ENCODE measurements at regions of chr13 and their contacts with region 1.

Region 1: DNA sequence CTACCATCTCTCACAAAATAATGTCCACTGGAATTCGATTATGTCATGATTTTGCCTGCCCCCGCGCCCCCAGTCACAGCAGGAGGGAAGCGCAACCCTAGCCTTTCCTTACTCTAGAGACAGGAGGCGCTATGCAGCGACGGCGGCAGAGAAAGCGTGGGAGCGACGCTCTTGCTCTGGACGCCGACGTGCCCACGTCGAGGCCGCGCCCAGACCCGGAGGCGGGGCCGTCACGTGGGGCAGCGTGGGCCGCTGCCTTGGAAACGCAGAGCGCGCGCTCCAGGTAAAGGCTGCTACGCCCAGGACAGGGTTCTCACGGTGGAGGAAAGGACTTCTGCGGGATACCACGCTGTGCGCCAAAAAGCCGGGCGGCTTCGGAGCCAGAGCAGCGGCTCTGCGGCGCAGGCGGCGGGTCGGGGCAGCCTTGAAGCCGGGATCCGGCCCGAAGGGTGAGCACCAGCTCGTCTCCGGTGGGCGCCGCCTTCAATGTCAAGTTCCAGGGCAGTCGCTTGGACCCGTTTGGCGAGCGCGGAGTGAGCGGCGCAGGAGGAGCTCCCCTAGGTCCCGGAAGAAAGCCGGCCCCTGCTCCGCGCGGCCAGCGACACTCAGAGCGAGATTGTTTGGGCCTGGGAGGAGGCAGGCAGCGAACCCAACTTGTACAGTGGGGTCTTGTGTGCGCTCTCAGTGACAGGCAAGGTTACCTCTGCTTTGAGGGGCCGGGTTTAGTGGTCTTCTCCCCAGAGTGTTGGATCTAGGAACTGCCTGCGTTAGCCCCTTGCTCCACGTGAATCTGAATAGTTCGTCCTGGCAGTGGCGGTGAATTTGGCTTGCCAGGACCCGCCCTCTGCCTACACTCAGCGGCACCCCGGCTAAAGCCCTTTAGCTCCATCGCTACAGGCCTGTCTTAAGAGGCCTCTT is 121.7 kb downstream of the MRPL57 start:
- DNase-seq: peak; percentile 86 to 87
- H3K4me3 ChIP-seq: peak overlapping the region; percentile 28 to 91 (median 86)
- H3K27ac ChIP-seq: peak overlapping the region; percentile 58 to 68 (median 62)
- H3K4me1 ChIP-seq: peaks cover 15 to 22% of the 10 kb centered on the region in 2 donors
- H3K27me3 ChIP-seq: no peaks in the 10 kb centered on the region
- CTCF ChIP-seq: peak; percentile 77 to 99 (median 90)
- POLR2A ChIP-seq: peak in 1 of 2 donors; percentile 73

Region 2: GRCh38 chr13:21176220-21176982 is 121.8 kb before region 1 on chr13 and contains the starts of genes MRPL57 and SKA3:
- intact Hi-C with region 1: loop called (anchors 10 kb)
- DNase-seq: peak; percentile 93 to 94
- H3K4me3 ChIP-seq: peak within 1 kb of the TSS; percentile 24 to 76 (median 72)
- H3K27ac ChIP-seq: peak within 1 kb of the TSS; percentile 86 to 97 (median 94)
- H3K4me1 ChIP-seq: peaks cover 6 to 16% of the 10 kb centered on the region in 2 donors
- H3K27me3 ChIP-seq: no peaks in the 10 kb centered on the region
- CTCF ChIP-seq: peak in 3 of 6 experiments; percentile 29 to 50 (median 36)
- POLR2A ChIP-seq: peak; percentile 51 to 96
- total RNA-seq, gene MRPL57: 23.5 to 65.8 (median 33.2) TPM
- total RNA-seq, gene SKA3: 1.3 to 1.4 TPM in 2 of 4 donors, not detected in the others